ENCODE measurements at regions of chr1 and their contacts with region 1.

Region 1: GRCh38 chr1:23539698-23540266 is 8.7 kb upstream of the E2F2 start:
- DNase-seq: peak; percentile 95
- ATAC-seq: peak; percentile 95
- H3K4me3 Mint-ChIP-seq: peak overlapping the region; percentile 18
- H3K27ac Mint-ChIP-seq: peak overlapping the region; percentile 61
- H3K4me1 Mint-ChIP-seq: peaks cover 13% of the 10 kb centered on the region
- H3K27me3 Mint-ChIP-seq: no peaks in the 10 kb centered on the region

Region 2: GRCh38 chr1:23263380-23263887 is 276.3 kb before region 1 on chr1:
- CTCF ChIA-PET with region 1: no interaction called
- POLR2A ChIA-PET with region 1: no interaction called
- intact Hi-C with region 1: no loop called
- DNase-seq: no peak
- ATAC-seq: no peak
- H3K4me3 Mint-ChIP-seq: no peak overlapping the region
- H3K27ac Mint-ChIP-seq: no peak overlapping the region
- H3K4me1 Mint-ChIP-seq: no peaks in the 10 kb centered on the region
- H3K27me3 Mint-ChIP-seq: no peaks in the 10 kb centered on the region

Region 3: DNA sequence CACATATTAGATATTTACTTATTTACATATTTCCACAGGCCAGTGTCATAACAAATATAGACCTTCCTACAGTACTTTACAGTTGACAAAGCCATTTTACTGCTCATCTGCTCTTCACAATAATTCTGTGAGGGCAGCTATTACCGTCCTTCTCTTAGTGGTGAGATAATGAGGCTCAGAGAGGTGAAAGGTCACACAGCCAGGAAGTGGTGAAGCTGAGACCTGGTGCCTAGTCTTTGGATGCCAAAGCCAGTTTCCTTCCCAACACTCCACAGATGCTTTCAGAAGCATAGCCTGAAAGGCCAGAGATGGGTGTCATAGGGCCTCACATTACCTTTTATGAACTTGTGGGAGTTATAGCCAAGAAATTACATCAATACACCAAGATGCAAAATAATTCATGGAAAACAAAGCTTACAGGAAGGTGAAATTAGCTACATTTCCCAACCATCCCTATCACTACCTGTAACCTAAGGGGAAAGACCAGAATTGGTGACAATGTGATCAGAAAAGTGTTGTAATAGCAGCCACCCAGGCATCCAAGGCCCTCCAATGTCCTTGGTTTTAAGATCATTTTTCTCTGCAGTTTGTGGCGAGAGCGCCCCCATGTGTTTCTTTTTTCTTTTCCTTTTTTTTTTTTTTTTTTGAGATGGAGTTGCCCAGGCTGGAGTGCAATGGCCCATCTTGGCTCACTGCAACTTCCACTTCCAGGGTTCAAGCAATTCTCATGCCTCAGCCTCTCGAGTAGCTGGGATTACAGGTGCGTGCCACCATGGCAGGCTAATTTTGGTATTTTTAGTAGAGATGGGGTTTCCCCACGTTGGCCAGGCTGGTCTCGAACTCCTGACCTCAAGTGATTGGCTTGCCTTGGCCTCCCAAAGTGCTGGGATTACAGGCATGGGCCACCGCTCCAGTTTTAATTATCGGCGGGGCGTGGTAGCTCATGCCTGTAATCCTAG is 125.3 kb after region 1 on chr1:
- CTCF ChIA-PET with region 1: interaction called, 4 read pairs
- POLR2A ChIA-PET with region 1: no interaction called
- intact Hi-C with region 1: loop called in 1 of 2 experiments (anchors 1 kb)
- DNase-seq: peak; percentile 47
- ATAC-seq: peak; percentile 49
- H3K4me3 Mint-ChIP-seq: no peak overlapping the region
- H3K27ac Mint-ChIP-seq: no peak overlapping the region
- H3K4me1 Mint-ChIP-seq: peaks cover 6% of the 10 kb centered on the region
- H3K27me3 Mint-ChIP-seq: no peaks in the 10 kb centered on the region

Measured in activated CD4-positive, alpha-beta T cell treated with anti-CD3 and anti-CD28 coated beads for 36 hours (primary cell).